CD8-positive, alpha-beta T cell (primary cell): ENCODE measurements at regions of chr7 and their contacts with region 1.

Region 1: DNA sequence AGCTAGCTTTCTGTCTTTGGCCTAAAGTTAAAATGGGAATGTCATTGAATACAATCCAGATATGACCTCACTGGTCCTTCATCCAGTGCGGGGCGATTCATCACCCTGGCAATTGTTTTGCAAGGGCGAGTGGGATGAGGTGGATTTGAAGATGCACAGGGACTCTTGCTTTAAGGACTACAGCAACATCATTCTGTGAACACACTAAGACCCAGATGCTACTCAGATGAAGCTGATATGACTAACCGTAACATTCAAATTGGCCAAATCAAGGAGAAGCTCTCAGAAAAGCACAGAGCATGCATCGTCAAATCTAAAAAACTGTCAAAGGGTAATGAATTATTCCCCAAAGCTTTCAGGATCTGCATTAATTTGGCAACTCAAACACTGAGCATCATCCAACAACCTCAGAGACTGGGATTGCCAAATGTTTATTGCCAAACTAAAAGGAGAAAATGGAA is 12.8 kb downstream of the CPA1 start:
- DNase-seq: no peak
- ATAC-seq: no peak
- H3K4me3 ChIP-seq: no peak overlapping the region
- H3K4me3 Mint-ChIP-seq: no peak overlapping the region
- H3K27ac ChIP-seq: no peak overlapping the region
- H3K27ac Mint-ChIP-seq: peak overlapping the region; percentile 55
- H3K4me1 ChIP-seq: peaks cover 25% of the 10 kb centered on the region
- H3K4me1 Mint-ChIP-seq: peaks cover 33% of the 10 kb centered on the region
- H3K27me3 ChIP-seq: no peaks in the 10 kb centered on the region
- H3K27me3 Mint-ChIP-seq: no peaks in the 10 kb centered on the region
- CTCF ChIP-seq: no peak

Region 2: DNA sequence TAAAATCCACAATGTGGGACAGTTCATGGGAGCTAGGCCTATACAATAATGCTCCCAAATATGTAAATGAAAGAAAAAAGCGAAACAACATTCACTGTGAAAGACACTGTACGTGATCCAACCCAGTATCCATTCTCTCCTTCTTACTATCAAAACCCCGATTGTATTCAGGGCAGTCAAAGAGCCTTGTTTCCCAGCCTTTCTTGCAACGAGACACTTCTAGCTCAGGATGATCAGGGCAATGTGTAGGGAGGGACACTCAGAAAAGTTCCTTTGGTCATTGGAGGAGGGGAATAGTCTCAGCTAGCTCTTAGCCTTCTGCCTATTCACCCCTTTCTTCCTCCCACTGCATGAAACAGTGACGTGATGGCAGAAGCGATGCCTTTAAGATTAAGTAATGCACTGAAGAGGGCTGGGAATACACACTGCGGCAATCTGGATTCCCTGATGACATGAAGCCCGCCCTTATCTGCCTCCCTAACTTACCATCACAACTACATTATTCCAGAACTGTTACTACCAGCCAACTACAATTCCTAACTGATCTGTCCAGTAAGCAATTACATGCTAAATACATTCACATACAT is 467.6 kb before region 1 on chr7:
- CTCF ChIA-PET with region 1: no interaction called
- POLR2A ChIA-PET with region 1: no interaction called
- intact Hi-C with region 1: no loop called
- DNase-seq: no peak
- ATAC-seq: no peak
- H3K4me3 ChIP-seq: no peak overlapping the region
- H3K4me3 Mint-ChIP-seq: no peak overlapping the region
- H3K27ac ChIP-seq: no peak overlapping the region
- H3K27ac Mint-ChIP-seq: no peak overlapping the region
- H3K4me1 ChIP-seq: peaks cover 10% of the 10 kb centered on the region
- H3K4me1 Mint-ChIP-seq: peaks cover 35% of the 10 kb centered on the region
- H3K27me3 ChIP-seq: no peaks in the 10 kb centered on the region
- H3K27me3 Mint-ChIP-seq: no peaks in the 10 kb centered on the region
- CTCF ChIP-seq: no peak

Region 3: GRCh38 chr7:130415006-130415405 is 21.9 kb after region 1 on chr7:
- CTCF ChIA-PET with region 1: interaction called, 9 read pairs
- POLR2A ChIA-PET with region 1: interaction called, 4 read pairs
- intact Hi-C with region 1: loop called in 1 of 2 experiments (anchors 1 kb)
- DNase-seq: peak in 2 of 9 experiments; percentile 11 to 48
- ATAC-seq: no peak
- H3K4me3 ChIP-seq: peak overlapping the region in 1 of 2 experiments; percentile 6
- H3K4me3 Mint-ChIP-seq: peak overlapping the region; percentile 50
- H3K27ac ChIP-seq: no peak overlapping the region
- H3K27ac Mint-ChIP-seq: peak overlapping the region; percentile 66
- H3K4me1 ChIP-seq: peaks cover 82% of the 10 kb centered on the region
- H3K4me1 Mint-ChIP-seq: peaks cover 92% of the 10 kb centered on the region
- H3K27me3 ChIP-seq: no peaks in the 10 kb centered on the region
- H3K27me3 Mint-ChIP-seq: no peaks in the 10 kb centered on the region
- CTCF ChIP-seq: no peak

Region 4: DNA sequence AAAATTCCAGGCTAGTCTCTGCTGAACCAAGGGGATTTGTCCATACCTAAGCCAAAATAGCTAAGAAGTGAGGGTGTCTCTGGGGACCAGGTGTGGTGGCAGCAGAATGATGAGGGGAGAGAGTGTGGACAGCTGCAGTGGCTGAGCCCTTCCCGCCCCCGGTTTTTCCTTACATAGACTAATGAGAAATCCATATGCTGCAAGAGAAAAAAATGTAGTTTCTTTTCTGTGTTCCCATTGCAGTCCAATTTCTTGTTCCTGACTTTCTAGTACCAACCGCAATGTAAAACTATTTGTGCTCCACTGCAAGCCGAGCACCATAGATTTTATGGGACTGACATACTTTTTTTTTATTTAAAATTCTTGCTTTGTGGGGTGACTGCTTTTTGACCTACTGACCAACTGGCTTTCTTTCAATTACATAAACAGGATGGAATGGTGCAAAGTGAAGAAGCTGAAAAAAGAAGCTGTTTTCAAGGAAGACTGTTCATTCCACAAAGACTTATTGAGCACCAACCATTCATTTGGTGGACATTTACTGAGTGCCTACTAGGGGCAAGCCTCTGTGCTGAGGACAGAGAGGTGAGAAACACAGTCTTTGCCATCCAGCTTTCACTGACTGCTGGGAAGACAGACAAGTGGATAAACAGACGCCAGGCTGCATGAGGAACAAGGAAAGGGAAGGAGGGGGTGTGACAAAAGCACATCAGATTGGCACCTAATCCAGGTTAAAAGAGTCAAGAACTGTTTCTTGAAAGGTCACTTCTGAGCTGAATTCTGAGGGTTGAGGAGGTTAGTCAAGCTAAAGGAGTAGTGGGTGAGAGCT is 37.9 kb after region 1 on chr7:
- CTCF ChIA-PET with region 1: interaction called, 3 read pairs
- POLR2A ChIA-PET with region 1: interaction called, 3 read pairs
- intact Hi-C with region 1: loop called in 1 of 2 experiments (anchors 5 kb)
- DNase-seq: no peak
- ATAC-seq: no peak
- H3K4me3 ChIP-seq: no peak overlapping the region
- H3K4me3 Mint-ChIP-seq: no peak overlapping the region
- H3K27ac ChIP-seq: no peak overlapping the region
- H3K27ac Mint-ChIP-seq: no peak overlapping the region
- H3K4me1 ChIP-seq: peaks cover 86% of the 10 kb centered on the region
- H3K4me1 Mint-ChIP-seq: peaks cover 16% of the 10 kb centered on the region
- H3K27me3 ChIP-seq: no peaks in the 10 kb centered on the region
- H3K27me3 Mint-ChIP-seq: no peaks in the 10 kb centered on the region
- CTCF ChIP-seq: no peak

Region 5: DNA sequence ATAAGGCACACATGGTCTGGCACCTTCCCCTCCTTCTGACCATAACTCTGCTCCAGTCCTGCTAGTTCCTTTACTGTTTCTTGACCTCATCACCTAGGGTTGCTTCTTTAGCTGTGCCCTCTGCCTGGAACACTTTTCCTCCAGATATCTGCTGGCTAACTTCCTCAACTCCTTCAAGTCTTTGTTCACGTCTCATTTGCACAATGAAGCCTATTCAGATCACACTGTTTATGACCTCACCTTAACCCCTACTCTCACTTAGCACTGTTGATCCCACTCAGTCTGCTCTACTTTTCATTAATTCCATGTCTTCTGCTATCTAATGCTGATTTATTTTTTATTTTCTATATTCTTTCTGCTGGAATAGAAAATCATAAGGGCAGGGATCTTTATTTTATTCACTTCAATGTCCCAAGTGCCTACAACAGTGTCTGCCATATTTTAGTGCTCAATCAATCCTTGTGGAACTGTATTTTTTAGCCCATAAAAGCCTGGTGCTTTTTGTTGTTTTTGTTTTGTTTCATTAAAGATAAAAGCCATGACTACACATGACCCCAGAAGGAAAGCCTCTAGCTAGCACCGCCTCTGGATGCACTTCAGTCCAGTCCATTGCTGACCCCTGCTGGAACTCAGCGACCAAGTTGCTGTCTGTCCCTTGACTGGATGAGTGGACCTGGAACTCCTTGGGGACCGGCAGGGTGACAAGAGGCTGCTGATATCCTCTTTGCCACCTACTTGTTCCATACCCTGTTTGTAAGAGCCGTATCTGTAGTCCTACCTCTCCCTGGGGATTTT is 328.6 kb after region 1 on chr7:
- CTCF ChIA-PET with region 1: no interaction called
- POLR2A ChIA-PET with region 1: no interaction called
- intact Hi-C with region 1: no loop called
- DNase-seq: peak in 4 of 9 experiments; percentile 12 to 49 (median 36)
- ATAC-seq: no peak
- H3K4me3 ChIP-seq: no peak overlapping the region
- H3K4me3 Mint-ChIP-seq: no peak overlapping the region
- H3K27ac ChIP-seq: no peak overlapping the region
- H3K27ac Mint-ChIP-seq: no peak overlapping the region
- H3K4me1 ChIP-seq: no peaks in the 10 kb centered on the region
- H3K4me1 Mint-ChIP-seq: no peaks in the 10 kb centered on the region
- H3K27me3 ChIP-seq: peaks cover 0 to 4% of the 10 kb centered on the region in 2 experiments
- H3K27me3 Mint-ChIP-seq: peaks cover 22% of the 10 kb centered on the region
- CTCF ChIP-seq: no peak